ENCODE measurements at regions of chr4 and their contacts with region 1.

Region 1: DNA sequence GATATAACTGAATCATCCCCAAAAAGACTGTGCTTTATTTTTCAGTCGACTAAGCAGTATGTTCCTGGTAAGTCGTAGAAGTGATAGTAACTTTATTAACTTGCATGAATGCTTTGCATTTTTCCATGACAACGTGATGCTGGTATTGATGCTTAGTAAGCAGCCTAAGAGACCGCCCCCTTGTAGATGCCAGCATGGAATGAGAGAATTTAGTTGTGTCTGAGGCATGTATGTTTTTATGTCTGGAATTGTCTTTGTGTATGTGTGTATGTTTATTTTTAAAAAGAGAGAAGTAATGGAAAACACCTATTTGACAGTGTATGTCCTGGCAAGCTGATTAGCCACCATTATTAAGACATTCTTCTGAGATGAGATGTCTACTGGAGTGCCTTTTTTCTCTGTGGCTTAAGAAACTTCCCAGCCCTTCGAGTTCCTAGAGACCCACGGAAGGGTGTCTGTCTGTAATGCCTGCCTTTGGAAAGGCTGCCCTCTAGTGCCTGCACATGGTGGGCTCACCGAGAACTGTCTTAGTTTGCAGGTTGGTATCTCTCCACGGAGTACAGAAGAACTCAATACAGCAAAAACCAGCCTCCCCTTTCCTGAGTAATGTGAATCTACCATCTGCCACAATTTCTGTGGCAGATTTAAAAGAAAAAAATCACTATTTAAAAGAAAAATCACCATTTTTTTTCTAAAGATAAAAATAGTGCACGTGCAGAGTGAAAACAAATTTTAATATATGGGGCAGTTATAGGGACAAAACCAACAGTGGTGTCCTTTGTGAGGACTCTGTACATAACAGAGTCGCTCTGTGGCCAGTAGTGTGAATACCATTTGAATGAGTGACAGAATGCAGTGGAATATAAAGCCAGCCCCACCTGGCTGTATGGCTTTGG is 85.9 kb downstream of the AASDH start:
- ATAC-seq: peak; percentile 84 to 99 (median 97)
- H3K4me3 ChIP-seq: no peak overlapping the region
- H3K27ac ChIP-seq: no peak overlapping the region
- H3K4me1 ChIP-seq: peaks cover 7 to 18% of the 10 kb centered on the region in 2 donors

Region 2: DNA sequence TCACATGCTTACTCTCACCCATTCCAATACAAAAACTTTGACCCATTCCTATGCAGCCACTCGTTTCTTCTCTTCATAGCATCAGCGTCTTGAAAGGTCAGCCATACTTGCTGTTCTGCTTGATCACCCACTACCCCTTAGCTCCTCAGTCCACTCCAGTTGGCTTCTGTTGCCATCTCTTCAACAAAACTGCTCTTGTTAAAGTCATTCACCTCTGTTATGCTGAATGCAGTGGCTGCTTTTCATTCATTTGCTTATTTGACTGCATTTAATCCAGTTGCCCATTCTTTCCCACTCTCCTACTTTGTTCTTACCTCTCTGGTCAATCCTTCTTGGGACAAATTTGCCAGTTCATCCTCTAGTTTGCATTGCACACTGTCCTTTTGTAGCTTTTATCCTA is 327.8 kb before region 1 on chr4:
- in situ Hi-C with region 1: loop called in 1 of 9 experiments (anchors 25 kb)
- ATAC-seq: peak in 1 of 8 experiments; percentile 29
- H3K4me3 ChIP-seq: no peak overlapping the region
- H3K27ac ChIP-seq: no peak overlapping the region
- H3K4me1 ChIP-seq: no peaks in the 10 kb centered on the region

Region 3: GRCh38 chr4:56149591-56149990 is 151.8 kb before region 1 on chr4:
- in situ Hi-C with region 1: no loop called
- ATAC-seq: peak in 3 of 8 experiments; percentile 68 to 78 (median 74)
- H3K4me3 ChIP-seq: no peak overlapping the region
- H3K27ac ChIP-seq: no peak overlapping the region
- H3K4me1 ChIP-seq: peaks cover 0 to 5% of the 10 kb centered on the region in 2 donors